Common myeloid progenitor, CD34-positive (primary cell): ENCODE measurements at regions of chr15 and their contacts with region 1.

Region 1: DNA sequence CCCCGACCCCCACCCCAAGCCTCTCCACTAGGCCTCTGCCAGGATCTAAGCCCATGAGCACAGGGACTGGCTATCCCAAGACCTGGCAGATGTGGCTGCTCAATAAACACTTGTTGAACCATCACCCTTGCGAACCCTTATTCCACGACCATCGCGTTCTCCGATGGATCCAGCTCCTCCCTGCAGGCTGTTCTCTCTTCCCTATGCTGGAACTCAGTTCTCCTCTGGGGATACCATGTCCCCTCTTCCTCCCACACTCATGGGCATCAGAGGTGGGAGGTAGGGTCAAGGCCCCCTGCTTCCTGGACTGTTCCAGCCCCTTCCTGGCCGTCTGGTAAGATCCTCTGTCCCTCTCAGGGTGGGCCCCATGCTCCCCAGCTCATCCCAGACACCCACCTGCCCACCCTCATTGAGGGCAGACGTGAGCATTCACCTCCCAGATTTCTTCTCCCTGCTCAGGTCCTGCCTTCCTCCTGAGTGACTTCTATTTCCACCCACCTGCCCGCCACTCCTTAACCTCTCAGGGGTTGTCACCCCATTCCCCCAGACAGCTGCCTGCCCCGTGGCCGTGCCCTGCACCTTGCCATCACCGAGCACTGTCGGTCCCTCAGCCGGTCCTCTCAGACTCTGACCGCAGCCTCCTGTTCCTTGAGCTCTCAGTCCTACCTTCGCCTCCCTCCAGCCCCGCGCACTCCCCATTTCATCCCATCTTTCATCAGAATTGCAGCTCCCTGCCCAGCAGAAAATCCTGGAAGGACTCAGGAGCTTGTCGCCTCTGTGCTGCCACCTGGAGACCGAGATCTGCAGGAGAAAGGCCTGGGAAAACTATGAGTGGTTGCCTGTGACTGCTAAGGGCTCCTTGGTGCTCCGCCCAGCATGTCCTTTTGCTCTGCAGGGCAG is 42.0 kb downstream of the PML start:
- DNase-seq: peak in 1 of 3 donors; percentile 17
- H3K4me3 ChIP-seq: no peak overlapping the region
- H3K27ac ChIP-seq: no peak overlapping the region
- H3K4me1 ChIP-seq: peaks cover 0 to 34% (median 15%) of the 10 kb centered on the region in 4 experiments
- H3K27me3 ChIP-seq: no peaks in the 10 kb centered on the region

Region 2: DNA sequence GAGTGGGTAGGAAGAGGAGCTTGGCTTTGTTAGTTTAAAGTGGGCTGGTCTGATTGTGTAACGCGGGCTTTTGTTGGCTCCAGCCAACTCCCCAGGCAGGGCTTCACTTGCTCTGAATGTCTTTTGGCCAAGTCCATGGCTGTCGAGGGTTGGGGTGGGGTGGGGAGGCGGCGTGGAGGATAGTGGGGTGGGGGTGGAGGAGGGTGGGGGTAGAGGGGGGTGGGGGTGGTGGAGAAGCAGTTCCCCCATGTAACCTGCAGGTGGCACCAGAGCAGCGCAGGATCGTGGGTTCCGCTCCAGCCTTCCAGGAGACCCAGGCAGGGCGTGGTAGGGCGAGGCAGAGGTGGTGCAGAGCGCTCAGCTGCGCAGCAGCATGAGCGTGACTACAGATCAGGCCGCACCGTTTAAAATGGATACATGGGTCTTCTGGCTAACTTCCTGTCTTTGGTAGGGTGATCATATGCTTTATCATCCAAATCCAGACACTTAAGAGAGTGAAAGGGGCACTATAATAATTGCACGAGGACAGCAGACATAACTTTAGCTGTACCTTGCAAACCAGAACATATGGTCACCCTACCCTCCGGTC is 17.5 kb after region 1 on chr15:
- CTCF ChIA-PET with region 1: interaction called, 53 read pairs
- POLR2A ChIA-PET with region 1: no interaction called
- DNase-seq: peak; percentile 67 to 81 (median 81)
- H3K4me3 ChIP-seq: peak overlapping the region in 3 of 7 experiments; percentile 19 to 62 (median 36)
- H3K27ac ChIP-seq: no peak overlapping the region
- H3K4me1 ChIP-seq: peaks cover 0 to 33% (median 16%) of the 10 kb centered on the region in 4 experiments
- H3K27me3 ChIP-seq: no peaks in the 10 kb centered on the region